PC-9 (cell line): ENCODE measurements at regions of chr3 and their contacts with region 1.

Region 1: GRCh38 chr3:52220380-52221026 is 4.9 kb downstream of the TLR9 start:
- DNase-seq: peak; percentile 67 to 87
- H3K4me3 ChIP-seq: no peak overlapping the region
- H3K27ac ChIP-seq: no peak overlapping the region
- H3K4me1 ChIP-seq: peaks cover 53% of the 10 kb centered on the region
- H3K27me3 ChIP-seq: no peaks in the 10 kb centered on the region
- CTCF ChIP-seq: peak; percentile 85

Region 2: GRCh38 chr3:52046186-52046913 is 174.2 kb before region 1 on chr3:
- CTCF ChIA-PET with region 1: no interaction called
- POLR2A ChIA-PET with region 1: no interaction called
- intact Hi-C with region 1: loop called (anchors 5 kb)
- DNase-seq: peak; percentile 84 to 93
- H3K4me3 ChIP-seq: peak overlapping the region; percentile 38; the same call in 1 of the 2 replicates
- H3K27ac ChIP-seq: peak overlapping the region; percentile 83
- H3K4me1 ChIP-seq: peaks cover 25% of the 10 kb centered on the region
- H3K27me3 ChIP-seq: no peaks in the 10 kb centered on the region
- CTCF ChIP-seq: no peak

Region 3: GRCh38 chr3:52176951-52177700 is 43.4 kb before region 1 on chr3:
- CTCF ChIA-PET with region 1: no interaction called
- POLR2A ChIA-PET with region 1: no interaction called
- intact Hi-C with region 1: loop called (anchors 2 kb)
- DNase-seq: peak in 1 of 2 experiments; percentile 73
- H3K4me3 ChIP-seq: no peak overlapping the region
- H3K27ac ChIP-seq: no peak overlapping the region
- H3K4me1 ChIP-seq: peaks cover 18% of the 10 kb centered on the region
- H3K27me3 ChIP-seq: no peaks in the 10 kb centered on the region
- CTCF ChIP-seq: no peak

Region 4: DNA sequence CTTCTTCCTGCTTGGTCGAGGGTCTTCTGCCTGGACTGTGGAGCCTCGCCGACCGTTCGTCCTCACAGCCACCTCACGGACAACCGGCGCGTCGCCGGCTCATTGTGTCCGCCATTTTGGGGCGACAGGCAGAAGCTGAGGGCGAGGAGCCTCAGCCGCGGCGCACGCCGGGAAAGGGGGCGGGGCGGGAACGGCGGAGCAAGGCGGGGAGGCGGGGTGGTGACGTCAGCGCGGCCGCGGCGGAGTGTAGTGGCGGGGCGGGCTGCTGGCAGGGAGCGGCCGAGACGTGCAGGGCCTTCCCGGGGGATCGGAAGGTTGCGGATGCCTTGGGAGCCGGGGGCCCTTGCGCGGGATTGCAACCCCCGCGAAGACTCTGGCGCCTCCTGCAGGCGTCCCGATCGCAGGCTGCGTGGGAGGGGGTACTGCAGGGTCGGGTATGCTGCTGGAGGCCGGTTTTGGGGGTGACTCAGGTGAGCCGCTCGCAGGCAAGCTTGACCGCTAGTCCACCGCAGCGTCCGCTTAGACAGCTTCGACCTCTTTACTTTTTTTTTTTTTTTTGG is 58.1 kb after region 1 on chr3 and contains the start of gene WDR82:
- CTCF ChIA-PET with region 1: interaction called, 14 read pairs
- POLR2A ChIA-PET with region 1: no interaction called
- intact Hi-C with region 1: no loop called
- DNase-seq: peak; percentile 67 to 96
- H3K4me3 ChIP-seq: peak within 1 kb of the TSS; percentile 78
- H3K27ac ChIP-seq: peak within 1 kb of the TSS; percentile 75
- H3K4me1 ChIP-seq: peaks cover 23% of the 10 kb centered on the region
- H3K27me3 ChIP-seq: no peaks in the 10 kb centered on the region
- CTCF ChIP-seq: peak; percentile 45
- total RNA-seq, gene WDR82: 34.2 and 44.5 TPM in 2 replicates

Region 5: GRCh38 chr3:52455283-52456168 is 235.0 kb after region 1 on chr3 and contains the start of gene NISCH:
- CTCF ChIA-PET with region 1: no interaction called
- POLR2A ChIA-PET with region 1: no interaction called
- intact Hi-C with region 1: loop called (anchors 5 kb)
- DNase-seq: peak in 1 of 2 experiments; percentile 92
- H3K4me3 ChIP-seq: peak within 1 kb of the TSS; percentile 81
- H3K27ac ChIP-seq: no peak within 1 kb of the TSS
- H3K4me1 ChIP-seq: peaks cover 27% of the 10 kb centered on the region
- H3K27me3 ChIP-seq: no peaks in the 10 kb centered on the region
- CTCF ChIP-seq: no peak
- total RNA-seq, gene NISCH: 66.1 and 68.0 TPM in 2 replicates